PC-9 (cell line): ENCODE measurements at regions of chr3 and their contacts with region 1.

Region 1: DNA sequence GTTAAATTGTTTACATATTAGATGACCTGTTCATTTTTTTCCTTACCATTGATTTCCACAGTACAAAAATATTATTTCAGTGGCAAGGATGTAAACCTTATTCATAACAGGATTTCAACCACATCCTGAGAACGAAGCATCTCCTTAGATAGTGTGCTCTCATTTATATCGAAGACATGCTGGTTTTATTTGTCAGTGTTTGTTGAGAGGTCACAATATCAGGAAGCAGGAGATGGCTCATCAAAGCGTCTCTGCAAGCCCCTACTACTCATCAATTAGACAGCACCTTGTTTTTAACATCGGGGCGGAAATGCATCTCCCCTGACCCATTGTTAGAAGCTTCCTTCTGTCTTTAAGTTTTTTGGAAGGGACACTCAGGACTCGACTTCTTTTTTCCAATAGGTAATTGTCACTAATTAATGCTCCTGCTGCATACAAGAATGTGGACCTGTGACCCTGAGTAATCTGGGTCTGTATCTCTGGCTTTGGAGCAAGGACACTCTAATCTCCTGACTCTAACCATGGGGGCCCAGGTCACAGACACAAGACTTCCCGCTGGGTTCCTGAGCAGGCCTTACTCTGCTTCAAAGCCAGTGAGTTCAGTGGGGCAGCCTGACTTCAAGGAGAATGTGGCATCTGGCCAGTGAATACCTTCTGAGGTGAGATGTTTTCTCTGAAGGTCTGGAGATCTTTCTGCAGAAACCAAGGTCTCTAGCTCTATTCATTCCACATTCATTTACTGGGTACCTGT is 50.3 kb downstream of the MECOM start:
- DNase-seq: no peak
- H3K4me3 ChIP-seq: no peak overlapping the region
- H3K27ac ChIP-seq: no peak overlapping the region
- H3K4me1 ChIP-seq: no peaks in the 10 kb centered on the region
- H3K27me3 ChIP-seq: no peaks in the 10 kb centered on the region
- CTCF ChIP-seq: no peak

Region 2: DNA sequence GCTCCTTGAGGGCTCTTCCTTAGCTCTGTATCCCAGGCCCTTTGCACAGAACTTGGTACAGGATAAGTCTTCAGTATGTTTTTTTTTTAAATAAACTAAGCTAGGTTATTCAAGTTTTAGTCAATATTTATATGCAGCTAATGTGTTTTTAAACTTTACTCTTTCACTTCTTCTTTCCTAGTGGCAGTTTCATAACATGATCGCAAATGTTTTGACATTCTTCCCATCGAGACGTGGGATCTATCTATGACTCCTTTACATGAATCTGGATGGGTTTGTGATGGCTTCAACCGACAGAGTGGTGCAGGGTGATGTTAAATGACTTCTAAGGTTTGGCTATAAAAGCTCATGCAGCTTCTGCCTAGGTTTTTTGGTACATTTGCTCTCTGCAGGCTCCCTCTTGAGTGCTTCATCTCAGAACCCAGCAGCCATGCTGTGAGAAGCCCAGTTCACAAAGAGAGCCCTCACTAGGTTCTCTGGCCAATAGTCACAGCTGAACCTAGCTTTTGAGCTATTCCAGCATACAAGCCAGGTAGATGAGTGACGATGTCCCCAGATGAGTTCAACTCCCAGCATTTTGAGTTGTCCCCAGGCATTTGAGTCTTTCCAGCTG is 63.8 kb after region 1 on chr3:
- CTCF ChIA-PET with region 1: no interaction called
- POLR2A ChIA-PET with region 1: no interaction called
- intact Hi-C with region 1: no loop called
- DNase-seq: no peak
- H3K4me3 ChIP-seq: no peak overlapping the region
- H3K27ac ChIP-seq: no peak overlapping the region
- H3K4me1 ChIP-seq: no peaks in the 10 kb centered on the region
- H3K27me3 ChIP-seq: no peaks in the 10 kb centered on the region
- CTCF ChIP-seq: no peak

Region 3: DNA sequence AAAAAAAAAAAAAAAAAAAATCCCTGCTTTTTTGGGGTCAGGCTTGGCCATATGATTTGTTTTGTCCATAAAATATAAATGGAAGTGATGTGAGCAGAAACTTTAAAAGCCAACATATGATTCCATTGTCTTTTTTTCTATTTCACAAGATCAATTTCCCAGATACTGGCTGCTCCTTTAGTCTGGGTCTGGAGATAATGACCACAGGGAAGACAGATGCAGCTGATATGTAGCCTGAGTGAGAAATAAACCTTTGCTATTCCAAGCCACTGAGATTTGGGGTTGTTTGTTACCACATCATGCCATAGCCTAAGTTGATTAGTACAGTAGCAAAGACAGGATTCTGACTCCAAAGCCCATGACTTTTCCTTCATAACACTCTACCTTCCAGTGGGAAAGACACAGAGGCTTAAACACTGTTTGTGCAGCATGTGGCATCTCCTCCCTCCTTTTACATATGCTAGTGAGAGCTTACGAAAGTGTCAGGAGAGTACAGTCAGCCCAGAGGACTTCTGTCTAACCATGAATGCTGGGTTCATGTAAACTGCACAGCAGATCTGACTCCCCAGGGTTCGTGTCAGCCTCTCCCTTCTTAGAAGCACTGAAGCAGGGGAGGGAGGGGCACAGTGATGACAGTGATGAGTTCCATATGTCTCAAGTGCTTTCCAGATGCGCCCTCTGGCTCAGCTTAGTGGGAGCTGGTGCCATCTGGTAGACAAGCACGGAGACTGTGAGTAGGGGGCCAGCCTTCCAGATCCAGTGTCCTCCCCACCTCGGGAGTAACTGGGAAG is 1009.3 kb after region 1 on chr3:
- CTCF ChIA-PET with region 1: no interaction called
- POLR2A ChIA-PET with region 1: interaction called, 23 read pairs
- intact Hi-C with region 1: no loop called
- DNase-seq: no peak
- H3K4me3 ChIP-seq: no peak overlapping the region
- H3K27ac ChIP-seq: no peak overlapping the region
- H3K4me1 ChIP-seq: no peaks in the 10 kb centered on the region
- H3K27me3 ChIP-seq: no peaks in the 10 kb centered on the region
- CTCF ChIP-seq: no peak